GM12878 (cell line): ENCODE measurements at regions of chr1 and their contacts with region 1.

Region 1: GRCh38 chr1:31617917-31618660 is 600 bp downstream of the HCRTR1 start:
- DNase-seq: no peak
- ATAC-seq: peak; percentile 91
- H3K4me3 ChIP-seq: no peak overlapping the region
- H3K27ac ChIP-seq: no peak overlapping the region
- H3K4me1 ChIP-seq: no peaks in the 10 kb centered on the region; the same call in 1 of the 2 replicates
- H3K27me3 ChIP-seq: no peaks in the 10 kb centered on the region; a peak in 2 of 4 replicates
- CTCF ChIP-seq: peak; percentile 71 to 93 (median 71)
- EP300 ChIP-seq: no peak
- POLR2A ChIP-seq: no peak
- RAD21 ChIP-seq: peak; percentile 64

Region 2: GRCh38 chr1:31394628-31395193 is 223.4 kb before region 1 on chr1:
- CTCF ChIA-PET with region 1: interaction called, 7 read pairs
- POLR2A ChIA-PET with region 1: no interaction called
- RAD21 ChIA-PET with region 1: interaction called, 10 read pairs
- SMC1A ChIA-PET with region 1: no interaction called
- in situ Hi-C with region 1: no loop called
- intact Hi-C with region 1: no loop called
- DNase-seq: peak; percentile 21
- ATAC-seq: peak; percentile 98
- H3K4me3 ChIP-seq: peak overlapping the region; percentile 50; the same call in 1 of the 2 replicates
- H3K27ac ChIP-seq: no peak overlapping the region
- H3K4me1 ChIP-seq: peaks cover 2% of the 10 kb centered on the region
- H3K27me3 ChIP-seq: no peaks in the 10 kb centered on the region; a peak in 1 of 4 replicates
- CTCF ChIP-seq: peak; percentile 82 to 92 (median 83)
- EP300 ChIP-seq: peak in 1 of 2 experiments; percentile 10; a peak in 1 of 4 replicates
- POLR2A ChIP-seq: no peak
- RAD21 ChIP-seq: peak; percentile 72

Region 3: DNA sequence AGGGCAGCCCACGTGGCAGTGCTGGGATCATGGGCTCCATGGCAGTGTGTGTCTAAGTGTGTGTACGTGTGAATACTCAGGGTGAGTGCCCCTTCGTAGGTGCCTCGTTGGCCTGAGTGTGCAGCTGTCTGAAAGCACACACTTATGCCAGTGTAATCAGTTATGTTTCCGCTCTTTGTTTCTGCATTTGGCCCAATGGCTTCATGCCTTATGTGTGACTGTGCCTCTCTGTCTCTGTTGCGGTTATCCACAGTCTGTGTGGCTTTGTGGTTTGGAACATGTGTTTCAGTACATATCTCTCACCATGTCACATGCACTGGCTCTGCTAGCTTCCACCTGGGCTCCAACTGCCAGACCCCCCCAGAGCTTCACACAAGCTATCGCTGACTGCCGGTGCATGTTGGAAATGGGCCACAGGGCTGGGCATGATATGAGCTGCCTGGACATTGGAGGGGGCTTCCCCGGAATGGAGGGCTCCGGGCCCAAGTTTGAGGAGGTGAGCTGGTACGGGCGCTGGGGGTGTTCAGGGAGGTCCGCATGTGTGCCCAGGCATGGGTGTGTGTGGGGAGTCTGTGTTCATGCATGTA is 112.1 kb before region 1 on chr1:
- CTCF ChIA-PET with region 1: no interaction called
- POLR2A ChIA-PET with region 1: no interaction called
- RAD21 ChIA-PET with region 1: no interaction called
- SMC1A ChIA-PET with region 1: no interaction called
- in situ Hi-C with region 1: no loop called
- intact Hi-C with region 1: no loop called
- DNase-seq: peak; percentile 83
- ATAC-seq: peak; percentile 56
- H3K4me3 ChIP-seq: no peak overlapping the region
- H3K27ac ChIP-seq: 0 out of 2 replicates have a peak overlapping the region, but pooled peaks have one; percentile 51
- H3K4me1 ChIP-seq: peaks cover 23% of the 10 kb centered on the region
- H3K27me3 ChIP-seq: no peaks in the 10 kb centered on the region
- CTCF ChIP-seq: no peak
- EP300 ChIP-seq: peak; percentile 79 to 91
- POLR2A ChIP-seq: no peak; the same call in 1 of the 2 replicates
- RAD21 ChIP-seq: no peak

Region 4: DNA sequence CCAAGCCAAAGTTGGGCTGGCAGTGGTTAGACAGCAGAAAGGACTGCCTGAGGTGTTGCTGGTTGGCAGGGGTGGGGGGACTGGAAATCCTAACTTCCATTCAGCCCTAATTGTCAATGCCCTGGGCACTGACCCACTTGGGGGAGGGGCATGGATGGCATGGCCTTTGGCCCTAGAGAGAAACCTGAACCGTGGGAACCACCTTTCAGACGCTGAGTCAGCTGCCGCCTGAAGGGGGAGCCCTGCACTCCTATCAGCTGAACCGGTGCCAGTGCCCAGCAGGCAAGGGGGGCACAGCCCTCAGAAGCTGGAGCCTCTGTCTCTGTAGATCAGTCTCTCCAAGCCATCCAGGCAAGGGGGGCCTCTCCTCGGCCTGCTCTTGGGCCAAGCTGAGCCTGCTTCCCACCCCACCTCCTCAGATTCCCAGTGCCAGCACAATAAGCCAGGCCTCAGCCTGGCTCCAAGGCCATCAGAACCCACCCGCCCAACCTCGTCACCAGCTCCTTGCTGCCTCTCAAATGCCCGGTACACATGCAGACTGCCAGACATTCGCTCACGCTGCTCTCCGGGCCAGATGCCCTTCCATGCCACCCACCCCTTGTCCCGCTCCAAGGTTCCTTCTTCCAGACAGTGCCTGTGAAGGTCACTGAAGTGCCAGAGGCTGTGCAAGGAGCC is 30.2 kb before region 1 on chr1:
- CTCF ChIA-PET with region 1: interaction called, 21 read pairs
- POLR2A ChIA-PET with region 1: interaction called, 7 read pairs
- RAD21 ChIA-PET with region 1: interaction called, 4 read pairs
- SMC1A ChIA-PET with region 1: interaction called, 3 read pairs
- in situ Hi-C with region 1: no loop called
- intact Hi-C with region 1: no loop called
- DNase-seq: no peak
- ATAC-seq: peak; percentile 95
- H3K4me3 ChIP-seq: no peak overlapping the region
- H3K27ac ChIP-seq: no peak overlapping the region
- H3K4me1 ChIP-seq: no peaks in the 10 kb centered on the region
- H3K27me3 ChIP-seq: no peaks in the 10 kb centered on the region; a peak in 1 of 4 replicates
- CTCF ChIP-seq: peak; percentile 69 to 82 (median 72)
- EP300 ChIP-seq: no peak
- POLR2A ChIP-seq: no peak
- RAD21 ChIP-seq: peak; percentile 55

Region 5: GRCh38 chr1:31605908-31606427 is 12.1 kb before region 1 on chr1:
- CTCF ChIA-PET with region 1: interaction called, 22 read pairs
- POLR2A ChIA-PET with region 1: interaction called, 4 read pairs
- RAD21 ChIA-PET with region 1: interaction called, 4 read pairs
- SMC1A ChIA-PET with region 1: interaction called, 7 read pairs
- in situ Hi-C with region 1: no loop called
- intact Hi-C with region 1: no loop called
- DNase-seq: peak; percentile 96
- ATAC-seq: peak; percentile 98
- H3K4me3 ChIP-seq: no peak overlapping the region
- H3K27ac ChIP-seq: peak overlapping the region; percentile 47
- H3K4me1 ChIP-seq: peaks cover 11% of the 10 kb centered on the region
- H3K27me3 ChIP-seq: no peaks in the 10 kb centered on the region
- CTCF ChIP-seq: no peak
- EP300 ChIP-seq: peak; percentile 92 to 98
- POLR2A ChIP-seq: no peak
- RAD21 ChIP-seq: no peak

Region 6: DNA sequence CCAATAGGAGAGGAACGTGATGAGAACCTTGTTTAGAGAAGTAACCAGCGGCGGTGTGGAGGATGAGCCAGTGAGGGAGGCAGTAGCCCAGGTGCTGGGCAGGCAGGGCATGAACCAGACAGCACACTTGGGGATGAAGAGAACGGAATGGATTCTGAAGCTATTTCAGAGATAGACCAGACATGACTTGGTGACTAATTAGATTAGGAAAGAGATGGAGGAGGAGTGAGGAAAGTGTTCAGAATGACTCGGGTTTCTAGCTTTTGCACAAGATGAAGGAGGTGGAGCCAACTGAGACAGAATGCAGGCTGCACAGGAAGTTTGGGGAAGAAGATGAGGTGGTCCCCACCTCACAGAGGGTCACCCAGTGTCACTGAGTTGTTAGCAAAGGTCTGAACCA is 21.5 kb after region 1 on chr1:
- CTCF ChIA-PET with region 1: interaction called, 47 read pairs
- POLR2A ChIA-PET with region 1: interaction called, 3 read pairs
- RAD21 ChIA-PET with region 1: interaction called, 6 read pairs
- SMC1A ChIA-PET with region 1: interaction called, 16 read pairs
- in situ Hi-C with region 1: no loop called
- intact Hi-C with region 1: no loop called
- DNase-seq: no peak
- ATAC-seq: no peak
- H3K4me3 ChIP-seq: no peak overlapping the region
- H3K27ac ChIP-seq: no peak overlapping the region
- H3K4me1 ChIP-seq: peaks cover 9% of the 10 kb centered on the region
- H3K27me3 ChIP-seq: no peaks in the 10 kb centered on the region
- CTCF ChIP-seq: no peak
- EP300 ChIP-seq: no peak
- POLR2A ChIP-seq: no peak
- RAD21 ChIP-seq: no peak